Mammary epithelial cell (primary cell): ENCODE measurements at regions of chr15 and their contacts with region 1.

Region 1: GRCh38 chr15:100349696-100350433 is 8.1 kb upstream of the ADAMTS17 start:
- DNase-seq: peak; percentile 78
- H3K4me3 ChIP-seq: peak overlapping the region; percentile 46 to 52 (median 48)
- H3K27ac ChIP-seq: peak overlapping the region; percentile 30
- H3K4me1 ChIP-seq: peaks cover 15% of the 10 kb centered on the region
- H3K27me3 ChIP-seq: no peaks in the 10 kb centered on the region
- CTCF ChIP-seq: peak; percentile 82 to 92

Region 2: GRCh38 chr15:99763827-99764226 is 586.0 kb before region 1 on chr15:
- CTCF ChIA-PET with region 1: no interaction called
- dilution Hi-C with region 1: no loop called
- in situ Hi-C with region 1: no loop called
- intact Hi-C with region 1: no loop called
- DNase-seq: no peak
- H3K4me3 ChIP-seq: no peak overlapping the region
- H3K27ac ChIP-seq: no peak overlapping the region
- H3K4me1 ChIP-seq: no peaks in the 10 kb centered on the region
- H3K27me3 ChIP-seq: no peaks in the 10 kb centered on the region
- CTCF ChIP-seq: no peak

Region 3: DNA sequence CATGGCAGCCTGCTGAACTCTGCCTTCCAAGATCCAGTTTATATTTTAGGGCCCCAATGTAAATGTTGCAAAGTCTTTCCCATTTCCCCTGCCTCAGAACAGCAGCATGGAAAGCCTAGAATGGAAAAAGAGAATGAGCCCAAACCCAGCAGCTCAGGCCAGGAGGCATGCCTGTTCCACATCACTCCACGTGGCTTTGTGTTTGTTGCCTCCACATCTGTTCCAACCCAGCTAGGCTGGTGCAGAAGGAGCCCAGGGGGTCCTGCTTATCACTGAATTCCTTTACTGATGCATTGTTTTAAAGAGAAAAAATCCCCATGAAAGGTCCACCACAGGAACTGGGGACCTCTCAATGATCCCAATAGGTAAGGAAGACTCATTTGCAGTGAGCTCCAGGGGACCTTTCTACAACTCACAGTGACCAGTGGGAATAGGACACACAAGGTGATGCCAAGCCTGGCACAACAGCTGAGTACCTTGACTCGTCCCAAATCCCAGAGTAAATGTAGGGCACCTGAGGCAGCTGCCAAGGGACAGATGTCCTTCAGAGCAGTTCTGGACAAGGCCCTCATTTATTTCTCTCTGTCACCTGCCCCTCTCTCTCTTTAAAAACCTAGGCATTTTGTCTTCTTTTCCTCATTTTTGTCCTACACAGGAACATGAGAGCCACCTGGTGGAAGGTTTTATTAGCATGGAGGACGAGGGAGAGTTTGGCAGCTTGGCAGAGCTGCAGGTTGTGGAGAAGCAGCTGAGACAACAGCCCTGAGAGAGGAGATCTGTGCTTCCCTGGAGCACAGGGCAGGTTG is 33.6 kb after region 1 on chr15:
- CTCF ChIA-PET with region 1: no interaction called
- dilution Hi-C with region 1: no loop called
- in situ Hi-C with region 1: no loop called
- intact Hi-C with region 1: loop called (anchors 1 kb)
- DNase-seq: peak; percentile 23
- H3K4me3 ChIP-seq: no peak overlapping the region
- H3K27ac ChIP-seq: no peak overlapping the region
- H3K4me1 ChIP-seq: no peaks in the 10 kb centered on the region
- H3K27me3 ChIP-seq: no peaks in the 10 kb centered on the region
- CTCF ChIP-seq: peak; percentile 34 to 56

Region 4: DNA sequence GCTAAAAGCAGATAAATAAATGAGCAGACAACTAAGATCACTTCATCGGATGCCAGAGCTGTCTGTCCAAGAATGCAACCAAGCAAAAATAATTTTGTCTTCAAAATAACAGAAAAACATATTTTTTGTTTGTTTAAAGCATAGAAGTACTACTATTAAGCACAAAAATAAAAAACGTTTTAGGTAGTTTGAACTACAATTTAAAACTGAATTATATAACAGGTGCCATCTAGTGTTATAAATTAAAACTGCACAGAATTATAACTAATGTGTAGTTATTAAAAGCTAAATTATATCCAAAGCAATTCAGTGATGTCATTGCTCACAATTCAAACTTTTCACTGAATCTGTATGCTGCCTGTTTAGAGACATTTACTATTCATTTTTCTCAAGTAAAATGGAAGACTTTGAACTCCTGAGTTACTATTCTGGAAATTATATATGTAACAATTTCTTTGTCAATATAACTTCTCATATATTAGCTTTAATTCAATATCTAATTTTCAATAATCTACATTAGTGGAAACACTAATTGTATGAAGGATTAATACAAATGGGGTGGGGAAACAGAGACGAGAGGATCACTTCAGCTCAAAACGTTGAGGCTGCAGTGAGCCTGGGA is 222.6 kb after region 1 on chr15:
- CTCF ChIA-PET with region 1: interaction called, 7 read pairs
- dilution Hi-C with region 1: no loop called
- in situ Hi-C with region 1: loop called (anchors 10 to 25 kb)
- intact Hi-C with region 1: loop called (anchors 1 kb)
- DNase-seq: no peak
- H3K4me3 ChIP-seq: no peak overlapping the region
- H3K27ac ChIP-seq: no peak overlapping the region
- H3K4me1 ChIP-seq: no peaks in the 10 kb centered on the region
- H3K27me3 ChIP-seq: no peaks in the 10 kb centered on the region
- CTCF ChIP-seq: peak; percentile 29 to 34

Region 5: GRCh38 chr15:101008158-101009139 is 658.6 kb after region 1 on chr15:
- CTCF ChIA-PET with region 1: interaction called, 7 read pairs
- dilution Hi-C with region 1: no loop called
- in situ Hi-C with region 1: no loop called
- intact Hi-C with region 1: loop called (anchors 1 kb)
- DNase-seq: peak; percentile 82
- H3K4me3 ChIP-seq: peak overlapping the region; percentile 52 to 72 (median 64)
- H3K27ac ChIP-seq: no peak overlapping the region
- H3K4me1 ChIP-seq: peaks cover 24% of the 10 kb centered on the region
- H3K27me3 ChIP-seq: no peaks in the 10 kb centered on the region
- CTCF ChIP-seq: peak; percentile 93 to 99